T-cell (primary cell): ENCODE measurements at regions of chr17 and their contacts with region 1.

Region 1: GRCh38 chr17:61009663-61010062 is 332.0 kb downstream of the BCAS3 start:
- DNase-seq: peak in 1 of 35 experiments; percentile 1
- ATAC-seq: no peak
- H3K4me3 ChIP-seq: no peak overlapping the region
- H3K4me3 Mint-ChIP-seq: no peak overlapping the region
- H3K27ac ChIP-seq: no peak overlapping the region
- H3K27ac Mint-ChIP-seq: no peak overlapping the region
- H3K4me1 ChIP-seq: no peaks in the 10 kb centered on the region
- H3K4me1 Mint-ChIP-seq: no peaks in the 10 kb centered on the region
- H3K27me3 ChIP-seq: no peaks in the 10 kb centered on the region
- H3K27me3 Mint-ChIP-seq: no peaks in the 10 kb centered on the region

Region 2: DNA sequence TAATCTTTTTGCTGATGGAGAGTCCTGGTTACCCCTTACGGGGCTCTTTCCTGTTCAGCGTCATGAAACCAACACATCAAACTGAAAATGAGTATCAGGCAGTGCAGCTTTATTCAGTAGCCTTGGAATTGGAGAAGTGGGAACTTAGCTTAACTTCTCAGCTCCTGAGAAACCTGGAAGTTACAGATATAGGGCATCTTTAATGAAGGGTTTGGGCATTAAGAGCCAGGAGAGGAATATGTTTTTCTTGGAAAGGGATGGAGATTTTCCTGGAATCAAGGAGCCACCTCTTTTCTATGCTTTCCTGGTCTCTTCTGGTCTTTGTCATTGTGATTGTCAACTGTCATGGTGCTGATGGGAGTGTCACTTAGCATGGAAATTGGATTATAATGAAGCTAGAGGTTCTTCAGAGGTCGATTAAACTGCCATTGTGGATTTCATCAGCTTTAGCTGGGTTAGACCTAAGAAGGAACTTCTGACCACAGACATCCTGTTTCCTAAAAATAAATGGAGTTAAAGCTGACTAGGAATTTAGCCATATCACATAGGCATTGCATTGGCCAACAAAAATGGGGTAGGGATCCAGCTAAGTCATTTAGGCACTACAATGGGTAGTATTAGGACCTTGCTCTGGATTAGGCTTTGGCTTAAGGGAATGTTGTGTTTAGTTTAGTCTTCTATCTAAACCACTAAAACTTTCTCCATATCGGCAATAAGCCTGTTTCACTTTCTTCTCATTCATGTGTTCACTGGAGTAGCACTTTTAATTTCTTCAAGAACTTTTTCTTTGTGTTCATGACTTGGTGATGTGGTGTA is 145.6 kb before region 1 on chr17:
- CTCF ChIA-PET with region 1: no interaction called
- POLR2A ChIA-PET with region 1: no interaction called
- DNase-seq: no peak
- ATAC-seq: no peak
- H3K4me3 ChIP-seq: no peak overlapping the region
- H3K4me3 Mint-ChIP-seq: peak overlapping the region in 2 of 3 donors; percentile 39 to 51
- H3K27ac ChIP-seq: no peak overlapping the region
- H3K27ac Mint-ChIP-seq: peak overlapping the region in 1 of 2 donors; percentile 62
- H3K4me1 ChIP-seq: peaks cover 0 to 8% of the 10 kb centered on the region in 2 experiments
- H3K4me1 Mint-ChIP-seq: peaks cover 21 to 28% (median 26%) of the 10 kb centered on the region in 3 donors
- H3K27me3 ChIP-seq: no peaks in the 10 kb centered on the region
- H3K27me3 Mint-ChIP-seq: no peaks in the 10 kb centered on the region

Region 3: DNA sequence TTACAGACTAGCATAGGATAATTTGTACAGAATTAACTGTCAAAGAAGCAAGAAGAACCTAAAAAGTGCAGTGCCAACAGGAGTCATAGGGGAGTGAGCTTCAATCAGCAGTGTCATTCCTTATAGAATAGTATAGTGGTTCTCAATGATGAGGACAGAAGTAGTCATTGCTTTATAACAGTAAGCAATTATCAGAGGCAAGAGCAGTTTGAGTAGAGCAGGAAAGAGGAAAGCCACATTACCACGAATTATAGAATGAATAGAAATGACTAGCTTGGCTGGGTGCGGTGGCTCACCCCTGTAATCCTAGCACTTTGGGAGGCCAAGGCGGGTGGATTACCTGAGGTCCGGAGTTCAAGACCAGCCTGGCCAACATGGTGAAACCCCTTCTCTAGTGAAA is 180.3 kb after region 1 on chr17:
- CTCF ChIA-PET with region 1: no interaction called
- POLR2A ChIA-PET with region 1: interaction called in 1 of 2 experiments, 10 read pairs
- DNase-seq: no peak
- ATAC-seq: no peak
- H3K4me3 ChIP-seq: no peak overlapping the region
- H3K4me3 Mint-ChIP-seq: no peak overlapping the region
- H3K27ac ChIP-seq: no peak overlapping the region
- H3K27ac Mint-ChIP-seq: no peak overlapping the region
- H3K4me1 ChIP-seq: no peaks in the 10 kb centered on the region
- H3K4me1 Mint-ChIP-seq: no peaks in the 10 kb centered on the region
- H3K27me3 ChIP-seq: no peaks in the 10 kb centered on the region
- H3K27me3 Mint-ChIP-seq: no peaks in the 10 kb centered on the region